ENCODE measurements at regions of chr4 and their contacts with region 1.

Region 1: DNA sequence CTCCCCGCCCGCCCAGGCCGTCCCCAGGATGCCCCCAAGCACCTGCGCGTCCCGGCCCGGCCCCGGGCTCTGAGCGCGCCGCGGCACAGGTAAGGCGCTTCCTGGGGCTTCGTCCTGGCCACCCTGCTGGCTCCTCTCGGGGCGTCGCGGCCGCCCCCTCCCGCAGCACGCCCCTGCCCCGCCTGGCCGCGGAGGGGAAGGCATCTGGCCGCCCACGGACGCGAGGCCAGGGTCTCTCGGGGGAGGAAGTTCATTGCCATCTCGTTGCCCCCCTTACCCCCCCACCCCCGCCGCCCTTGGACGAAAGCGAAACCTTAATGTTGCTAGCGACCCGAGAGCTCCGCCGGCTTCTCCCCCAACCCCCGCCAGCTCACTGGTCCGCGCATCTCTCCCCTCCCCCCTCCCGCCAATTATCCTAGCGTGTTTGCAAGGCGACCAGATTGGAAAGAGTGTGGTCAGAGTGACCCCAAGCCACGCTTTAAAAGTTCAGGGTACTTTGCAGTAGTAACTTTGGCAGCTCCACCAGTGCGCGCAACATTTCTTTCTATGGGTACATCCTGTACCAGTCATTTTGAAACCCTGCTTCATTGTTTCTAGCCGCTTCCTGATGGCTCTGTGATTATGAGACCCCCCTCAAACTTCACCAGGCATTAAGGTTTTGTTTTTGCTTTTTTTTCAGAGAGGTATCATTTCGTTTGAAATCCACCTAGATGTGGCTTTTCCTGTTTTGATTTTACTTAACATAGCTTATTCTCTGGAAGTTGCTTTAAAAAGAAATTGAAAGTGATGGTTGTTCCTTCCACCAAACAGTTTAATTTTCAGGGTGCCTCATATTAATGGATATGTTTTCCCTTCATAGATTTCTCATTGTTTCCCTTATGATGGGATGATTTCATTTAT is 626 bp downstream of the TBC1D1 start:
- DNase-seq: no peak
- H3K4me3 ChIP-seq: peak overlapping the region; percentile 95 to 99 (median 96)
- H3K27ac ChIP-seq: peak overlapping the region; percentile 94 to 98 (median 97)
- H3K4me1 ChIP-seq: peaks cover 18 to 71% (median 55%) of the 10 kb centered on the region in 4 donors
- H3K27me3 ChIP-seq: no peaks in the 10 kb centered on the region
- CTCF ChIP-seq: peak in 1 of 3 experiments; percentile 32
- EP300 ChIP-seq: no peak
- POLR2A ChIP-seq: no peak

Region 2: GRCh38 chr4:37737466-37737865 is 154.0 kb before region 1 on chr4:
- intact Hi-C with region 1: no loop called
- DNase-seq: no peak
- H3K4me3 ChIP-seq: no peak overlapping the region
- H3K27ac ChIP-seq: no peak overlapping the region
- H3K4me1 ChIP-seq: no peaks in the 10 kb centered on the region
- H3K27me3 ChIP-seq: no peaks in the 10 kb centered on the region
- CTCF ChIP-seq: no peak
- EP300 ChIP-seq: no peak
- POLR2A ChIP-seq: no peak

Region 3: DNA sequence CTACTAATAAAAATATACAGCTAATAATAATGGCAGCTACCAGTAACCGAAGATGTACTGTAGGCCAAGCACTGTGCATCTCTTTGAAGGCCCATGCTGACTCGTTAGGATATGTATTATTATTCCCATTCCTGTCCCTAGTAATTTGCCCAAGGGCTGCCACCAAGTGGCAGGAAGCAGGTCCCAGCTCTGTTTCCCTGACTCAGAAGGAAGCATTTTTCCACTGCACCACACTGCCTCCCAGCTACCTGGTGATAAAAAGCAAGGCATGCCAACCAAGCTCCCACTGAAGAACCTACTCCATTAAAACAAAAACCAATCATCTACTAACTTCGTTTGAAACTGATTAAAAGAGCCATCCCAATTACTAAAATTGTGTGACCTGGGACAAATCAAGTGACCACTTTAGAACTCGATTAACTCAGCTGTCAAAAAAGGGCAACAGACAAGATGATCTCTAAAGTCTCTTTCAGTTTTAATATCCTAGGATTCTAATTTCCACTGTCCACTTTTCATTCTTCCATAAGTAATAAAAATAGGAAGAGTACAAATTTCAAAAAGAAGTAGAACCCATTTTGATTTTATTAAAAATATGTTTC is 89.3 kb before region 1 on chr4:
- intact Hi-C with region 1: loop called (anchors 5 kb)
- DNase-seq: no peak
- H3K4me3 ChIP-seq: no peak overlapping the region
- H3K27ac ChIP-seq: no peak overlapping the region
- H3K4me1 ChIP-seq: no peaks in the 10 kb centered on the region
- H3K27me3 ChIP-seq: no peaks in the 10 kb centered on the region
- CTCF ChIP-seq: peak; percentile 57 to 77 (median 59)
- EP300 ChIP-seq: no peak
- POLR2A ChIP-seq: no peak

Region 4: GRCh38 chr4:38069271-38069760 is 177.8 kb after region 1 on chr4:
- intact Hi-C with region 1: no loop called
- DNase-seq: peak; percentile 37
- H3K4me3 ChIP-seq: no peak overlapping the region
- H3K27ac ChIP-seq: no peak overlapping the region
- H3K4me1 ChIP-seq: peaks cover 20 to 39% (median 31%) of the 10 kb centered on the region in 4 donors
- H3K27me3 ChIP-seq: no peaks in the 10 kb centered on the region
- CTCF ChIP-seq: no peak
- EP300 ChIP-seq: no peak
- POLR2A ChIP-seq: no peak